PC-9 (cell line): ENCODE measurements at regions of chr12 and their contacts with region 1.

Region 1: GRCh38 chr12:32755654-32756475 is at the start of gene YARS2:
- DNase-seq: peak; percentile 92 to 94
- H3K4me3 ChIP-seq: peak within 1 kb of the TSS; percentile 84
- H3K27ac ChIP-seq: peak within 1 kb of the TSS; percentile 91
- H3K4me1 ChIP-seq: peaks cover 21% of the 10 kb centered on the region
- H3K27me3 ChIP-seq: no peaks in the 10 kb centered on the region
- CTCF ChIP-seq: peak; percentile 93
- total RNA-seq, gene YARS2: 34.3 and 36.6 TPM in 2 replicates

Region 2: DNA sequence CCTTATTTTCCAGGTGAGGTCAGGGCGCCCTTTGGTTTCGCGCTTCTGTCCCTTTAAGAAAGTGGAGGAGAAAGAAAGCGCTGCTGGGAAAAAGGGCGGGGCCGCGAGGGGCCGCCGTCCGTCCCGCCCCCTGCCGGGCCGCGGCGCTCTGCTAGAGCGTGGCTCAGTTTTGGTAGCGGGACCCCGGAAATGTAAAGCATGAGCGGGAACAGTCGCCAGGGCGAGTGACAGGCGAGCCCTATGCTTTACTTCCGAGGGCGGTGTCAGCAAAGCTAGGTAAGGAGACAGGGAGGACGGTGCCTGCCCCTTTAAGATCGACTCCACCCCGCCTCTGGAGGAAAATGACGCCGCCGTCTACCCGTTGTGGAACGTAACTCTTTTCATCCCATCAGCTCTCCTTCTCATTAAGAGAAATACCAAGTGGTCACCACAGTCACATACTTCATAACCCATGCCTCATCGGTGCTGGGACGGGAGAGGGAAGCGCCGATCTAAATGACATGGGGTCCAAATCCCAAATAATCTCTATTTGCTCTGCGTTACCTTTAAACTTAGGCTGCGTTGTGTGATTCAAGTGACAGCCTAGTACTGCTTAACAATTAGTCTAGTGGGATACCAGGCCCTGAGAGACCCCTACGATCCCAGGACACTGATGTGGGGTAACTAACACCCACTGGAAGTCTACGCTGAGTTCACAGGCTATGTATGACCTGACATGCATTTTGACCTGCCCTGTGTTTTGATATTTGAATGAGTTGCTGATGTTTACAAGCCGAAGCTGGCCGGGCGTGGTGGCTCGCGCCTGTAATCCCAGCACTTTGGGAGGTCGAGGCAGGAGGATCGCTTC is 1096.6 kb before region 1 on chr12 and contains the start of gene ETFBKMT:
- CTCF ChIA-PET with region 1: no interaction called
- POLR2A ChIA-PET with region 1: no interaction called
- intact Hi-C with region 1: loop called (anchors 1 kb)
- DNase-seq: peak; percentile 94 to 97
- H3K4me3 ChIP-seq: peak within 1 kb of the TSS; percentile 62
- H3K27ac ChIP-seq: peak within 1 kb of the TSS; percentile 63
- H3K4me1 ChIP-seq: peaks cover 17% of the 10 kb centered on the region
- H3K27me3 ChIP-seq: no peaks in the 10 kb centered on the region
- CTCF ChIP-seq: peak; percentile 60
- total RNA-seq, gene ETFBKMT: 2.2 and 2.4 TPM in 2 replicates

Region 3: GRCh38 chr12:32365473-32366064 is 390.3 kb before region 1 on chr12:
- CTCF ChIA-PET with region 1: interaction called, 7 read pairs
- POLR2A ChIA-PET with region 1: interaction called, 3 read pairs
- intact Hi-C with region 1: loop called (anchors 1 kb)
- DNase-seq: peak; percentile 70 to 72
- H3K4me3 ChIP-seq: no peak overlapping the region
- H3K27ac ChIP-seq: no peak overlapping the region
- H3K4me1 ChIP-seq: no peaks in the 10 kb centered on the region
- H3K27me3 ChIP-seq: no peaks in the 10 kb centered on the region
- CTCF ChIP-seq: peak; percentile 94

Region 4: GRCh38 chr12:32706335-32707024 is 49.4 kb before region 1 on chr12:
- CTCF ChIA-PET with region 1: no interaction called
- POLR2A ChIA-PET with region 1: no interaction called
- intact Hi-C with region 1: no loop called
- DNase-seq: no peak
- H3K4me3 ChIP-seq: no peak overlapping the region
- H3K27ac ChIP-seq: no peak overlapping the region
- H3K4me1 ChIP-seq: no peaks in the 10 kb centered on the region
- H3K27me3 ChIP-seq: no peaks in the 10 kb centered on the region
- CTCF ChIP-seq: no peak

Region 5: GRCh38 chr12:32896432-32897273 is 140.8 kb after region 1 on chr12 and contains the start of gene PKP2:
- CTCF ChIA-PET with region 1: no interaction called
- POLR2A ChIA-PET with region 1: interaction called, 14 read pairs
- intact Hi-C with region 1: loop called (anchors 2 kb)
- DNase-seq: peak; percentile 98 to 100
- H3K4me3 ChIP-seq: peak within 1 kb of the TSS; percentile 93
- H3K27ac ChIP-seq: peak within 1 kb of the TSS; percentile 74
- H3K4me1 ChIP-seq: peaks cover 66% of the 10 kb centered on the region
- H3K27me3 ChIP-seq: no peaks in the 10 kb centered on the region
- CTCF ChIP-seq: no peak
- total RNA-seq, gene PKP2: 88.1 and 88.7 TPM in 2 replicates

Region 6: DNA sequence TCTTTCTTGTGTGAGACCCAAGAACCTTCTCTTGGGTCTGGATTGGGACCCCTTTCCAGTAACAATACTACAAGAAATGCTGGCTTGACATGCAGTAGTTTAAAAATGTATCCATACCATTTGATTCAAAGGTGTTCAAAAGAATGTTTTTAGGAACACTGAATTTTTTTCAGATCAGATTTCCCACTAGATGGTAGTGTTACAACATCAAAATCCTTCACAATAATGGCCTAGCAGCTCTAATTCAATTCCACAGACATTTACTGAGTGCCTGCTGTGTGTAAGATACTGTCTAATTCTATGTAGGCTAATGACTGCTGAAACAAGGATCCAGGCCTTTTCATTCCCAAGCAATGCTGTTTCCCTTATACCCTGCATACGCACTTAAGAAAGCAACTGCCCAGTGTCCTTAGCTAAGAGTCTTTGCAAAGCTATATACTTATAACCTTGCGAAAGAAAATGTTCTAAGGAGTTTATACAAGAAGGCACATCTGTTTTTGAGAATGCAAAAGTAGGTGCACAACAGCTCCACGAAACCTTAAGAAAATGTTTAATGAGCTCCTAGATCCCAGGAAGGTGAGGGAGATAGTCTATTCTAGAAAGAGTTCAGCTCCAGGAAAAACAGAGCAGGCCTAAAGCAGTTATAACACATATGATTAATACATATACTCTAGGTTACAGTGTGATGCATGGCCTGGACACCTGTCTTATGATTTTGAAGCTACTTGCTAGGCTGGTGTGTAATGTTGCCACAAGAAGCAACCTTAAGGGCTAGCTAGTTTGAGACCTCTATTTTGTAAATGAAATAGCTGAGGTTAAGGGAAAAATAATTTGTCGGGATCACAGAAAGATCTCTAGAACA is 191.6 kb after region 1 on chr12:
- CTCF ChIA-PET with region 1: interaction called, 5 read pairs
- POLR2A ChIA-PET with region 1: interaction called, 4 read pairs
- intact Hi-C with region 1: loop called (anchors 1 kb)
- DNase-seq: peak; percentile 14 to 50
- H3K4me3 ChIP-seq: no peak overlapping the region
- H3K27ac ChIP-seq: no peak overlapping the region
- H3K4me1 ChIP-seq: peaks cover 21% of the 10 kb centered on the region
- H3K27me3 ChIP-seq: no peaks in the 10 kb centered on the region
- CTCF ChIP-seq: peak; percentile 66

Region 7: DNA sequence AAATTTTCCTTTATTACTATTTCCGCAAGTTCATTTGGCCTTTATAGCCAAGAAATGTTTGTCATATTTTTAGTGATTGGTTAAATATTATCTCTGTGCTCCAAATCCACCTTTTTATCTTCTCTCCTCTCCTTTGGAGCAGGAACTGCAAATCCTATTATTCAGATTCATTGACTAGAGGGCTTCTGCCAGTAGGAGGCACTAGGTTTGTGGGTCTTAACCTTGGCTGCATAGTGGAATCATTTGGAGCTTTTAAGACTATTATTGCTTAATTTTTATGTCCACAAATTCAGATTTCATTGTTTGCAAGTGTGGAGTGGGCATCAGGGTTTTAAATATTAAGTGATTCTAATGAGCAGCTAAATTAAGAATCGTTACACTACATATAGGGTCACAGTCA is 759.0 kb after region 1 on chr12:
- CTCF ChIA-PET with region 1: no interaction called
- POLR2A ChIA-PET with region 1: no interaction called
- intact Hi-C with region 1: loop called (anchors 5 kb)
- DNase-seq: no peak
- H3K4me3 ChIP-seq: no peak overlapping the region
- H3K27ac ChIP-seq: no peak overlapping the region
- H3K4me1 ChIP-seq: peaks cover under 1% of the 10 kb centered on the region; the same call in 1 of the 2 replicates
- H3K27me3 ChIP-seq: no peaks in the 10 kb centered on the region
- CTCF ChIP-seq: no peak

Region 8: GRCh38 chr12:34126239-34126641 is 1370.4 kb after region 1 on chr12:
- CTCF ChIA-PET with region 1: no interaction called
- POLR2A ChIA-PET with region 1: no interaction called
- intact Hi-C with region 1: loop called (anchors 2 kb)
- DNase-seq: no peak
- H3K4me3 ChIP-seq: peak overlapping the region; percentile 29; the same call in 1 of the 2 replicates
- H3K27ac ChIP-seq: no peak overlapping the region
- H3K4me1 ChIP-seq: no peaks in the 10 kb centered on the region
- H3K27me3 ChIP-seq: no peaks in the 10 kb centered on the region
- CTCF ChIP-seq: no peak